MCF 10A (cell line): ENCODE measurements at regions of chr3 and their contacts with region 1.

Region 1: DNA sequence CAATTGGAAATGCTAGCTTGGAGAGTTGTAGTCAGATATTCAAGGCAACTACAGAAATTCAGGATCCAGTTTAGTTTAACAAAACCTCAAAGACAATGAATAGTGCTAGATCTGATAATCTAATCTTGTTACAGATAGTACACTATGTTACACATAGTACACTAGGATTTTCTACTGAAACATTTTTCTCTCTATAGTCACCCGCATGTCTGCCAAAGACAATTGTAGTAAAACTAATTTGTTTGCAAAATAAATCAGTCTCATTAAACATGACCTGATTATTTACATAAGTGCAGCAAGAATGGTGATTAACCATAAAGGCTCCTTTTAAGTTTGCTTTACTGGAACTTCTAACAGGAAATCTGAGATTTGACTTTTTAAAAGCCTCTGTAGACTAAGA is 52.0 kb downstream of the ILDR1 start:
- DNase-seq: no peak
- H3K4me3 Mint-ChIP-seq: no peak overlapping the region
- H3K27ac Mint-ChIP-seq: peak overlapping the region; percentile 24
- H3K4me1 Mint-ChIP-seq: peaks cover 15% of the 10 kb centered on the region
- H3K27me3 Mint-ChIP-seq: no peaks in the 10 kb centered on the region
- CTCF ChIP-seq: no peak

Region 2: GRCh38 chr3:121834696-121835464 is 135.2 kb before region 1 on chr3 and contains the starts of genes EAF2 and IQCB1:
- CTCF ChIA-PET with region 1: no interaction called
- POLR2A ChIA-PET with region 1: interaction called, 10 read pairs
- intact Hi-C with region 1: no loop called
- DNase-seq: peak; percentile 96
- H3K4me3 Mint-ChIP-seq: peak within 1 kb of the TSS; percentile 89
- H3K27ac Mint-ChIP-seq: peak within 1 kb of the TSS; percentile 84
- H3K4me1 Mint-ChIP-seq: peaks cover 12% of the 10 kb centered on the region
- H3K27me3 Mint-ChIP-seq: no peaks in the 10 kb centered on the region
- CTCF ChIP-seq: no peak
- total RNA-seq, gene EAF2: 2.5 and 2.7 TPM in 2 replicates
- total RNA-seq, gene IQCB1: 33.5 and 34.6 TPM in 2 replicates

Region 3: GRCh38 chr3:121855555-121855954 is 114.5 kb before region 1 on chr3:
- CTCF ChIA-PET with region 1: no interaction called
- POLR2A ChIA-PET with region 1: no interaction called
- intact Hi-C with region 1: no loop called
- DNase-seq: peak; percentile 37
- H3K4me3 Mint-ChIP-seq: no peak overlapping the region
- H3K27ac Mint-ChIP-seq: no peak overlapping the region
- H3K4me1 Mint-ChIP-seq: peaks cover 8% of the 10 kb centered on the region
- H3K27me3 Mint-ChIP-seq: no peaks in the 10 kb centered on the region
- CTCF ChIP-seq: peak; percentile 16

Region 4: GRCh38 chr3:121913305-121913990 is 56.6 kb before region 1 on chr3:
- CTCF ChIA-PET with region 1: no interaction called
- POLR2A ChIA-PET with region 1: no interaction called
- intact Hi-C with region 1: no loop called
- DNase-seq: no peak
- H3K4me3 Mint-ChIP-seq: no peak overlapping the region
- H3K27ac Mint-ChIP-seq: no peak overlapping the region
- H3K4me1 Mint-ChIP-seq: no peaks in the 10 kb centered on the region
- H3K27me3 Mint-ChIP-seq: no peaks in the 10 kb centered on the region
- CTCF ChIP-seq: no peak

Region 5: DNA sequence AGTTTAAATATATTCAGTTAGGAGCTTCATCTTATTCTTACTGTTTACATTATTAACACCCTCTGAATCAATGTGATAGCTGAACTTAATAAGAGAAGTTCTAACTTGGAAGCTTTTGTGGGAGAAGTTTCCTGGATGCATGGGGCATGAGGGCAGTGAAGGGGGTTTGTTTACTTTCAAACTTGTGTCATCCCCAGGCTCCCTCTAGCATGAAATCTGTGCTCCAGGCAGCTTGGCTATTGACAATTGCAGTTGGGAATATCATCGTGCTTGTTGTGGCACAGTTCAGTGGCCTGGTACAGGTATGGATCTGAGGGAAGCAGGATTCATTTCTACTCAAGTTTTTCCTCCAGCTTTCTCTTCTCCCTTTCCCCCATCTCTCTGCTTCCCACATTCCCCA is 29.9 kb before region 1 on chr3:
- CTCF ChIA-PET with region 1: no interaction called
- POLR2A ChIA-PET with region 1: no interaction called
- intact Hi-C with region 1: no loop called
- DNase-seq: no peak
- H3K4me3 Mint-ChIP-seq: no peak overlapping the region
- H3K27ac Mint-ChIP-seq: no peak overlapping the region
- H3K4me1 Mint-ChIP-seq: peaks cover 5% of the 10 kb centered on the region
- H3K27me3 Mint-ChIP-seq: no peaks in the 10 kb centered on the region
- CTCF ChIP-seq: no peak

Region 6: DNA sequence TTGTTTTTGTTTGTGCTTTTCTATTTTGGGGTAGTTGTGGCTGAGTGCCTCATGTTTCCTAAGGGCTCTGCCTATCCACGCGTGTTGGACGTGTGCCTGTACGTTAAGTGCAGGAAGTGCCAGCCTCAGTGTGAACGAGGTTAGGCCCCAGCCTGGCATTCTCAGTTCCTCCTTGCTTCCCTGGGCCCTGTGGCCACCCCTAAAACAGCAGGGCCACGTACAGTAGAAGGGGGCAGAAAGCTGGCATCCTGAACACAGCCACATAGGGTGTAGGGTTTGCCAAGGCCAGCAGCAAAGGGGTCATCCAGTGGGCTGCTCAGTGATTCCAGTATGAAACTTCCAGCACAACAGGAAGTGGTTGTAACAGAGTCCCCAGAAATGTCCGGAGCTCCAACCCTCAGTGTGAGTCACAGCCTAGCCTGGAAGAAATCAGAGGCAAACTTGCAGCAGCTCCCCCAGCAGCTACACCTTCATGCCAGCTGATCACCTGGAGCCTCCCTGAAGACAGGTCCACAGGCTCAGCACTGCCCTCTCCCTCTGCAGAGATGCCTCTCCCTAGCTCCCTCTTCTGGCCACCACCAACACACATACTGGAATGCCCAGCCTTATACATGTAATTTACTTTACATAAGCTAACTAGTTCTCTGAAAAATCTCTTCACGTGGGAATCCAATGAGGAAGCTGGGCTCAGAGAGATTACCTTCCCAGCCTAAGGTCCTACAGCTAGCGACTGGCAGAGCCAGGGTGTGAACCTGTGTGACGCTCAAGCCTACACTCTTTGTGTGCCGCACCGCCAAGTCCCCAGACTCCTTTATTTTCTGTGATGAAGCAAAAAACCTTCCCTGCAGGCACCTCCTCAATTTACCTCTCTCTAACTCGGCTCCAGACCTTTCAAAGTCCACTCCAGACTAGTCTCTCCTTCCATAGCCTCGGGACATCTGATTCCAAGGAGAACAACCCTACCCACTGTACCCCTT is 25.4 kb after region 1 on chr3:
- CTCF ChIA-PET with region 1: interaction called, 11 read pairs
- POLR2A ChIA-PET with region 1: interaction called, 5 read pairs
- intact Hi-C with region 1: no loop called
- DNase-seq: peak; percentile 79
- H3K4me3 Mint-ChIP-seq: no peak overlapping the region
- H3K27ac Mint-ChIP-seq: peak overlapping the region; percentile 61
- H3K4me1 Mint-ChIP-seq: peaks cover 24% of the 10 kb centered on the region
- H3K27me3 Mint-ChIP-seq: no peaks in the 10 kb centered on the region
- CTCF ChIP-seq: peak; percentile 33

Region 7: GRCh38 chr3:122200661-122201060 is 230.6 kb after region 1 on chr3:
- CTCF ChIA-PET with region 1: no interaction called
- POLR2A ChIA-PET with region 1: no interaction called
- intact Hi-C with region 1: no loop called
- DNase-seq: peak; percentile 13
- H3K4me3 Mint-ChIP-seq: no peak overlapping the region
- H3K27ac Mint-ChIP-seq: no peak overlapping the region
- H3K4me1 Mint-ChIP-seq: no peaks in the 10 kb centered on the region
- H3K27me3 Mint-ChIP-seq: peaks cover 11% of the 10 kb centered on the region
- CTCF ChIP-seq: no peak